ENCODE measurements at regions of chr6 and their contacts with region 1.

Region 1: GRCh38 chr6:159979136-159979874 is 10.4 kb downstream of the IGF2R start:
- DNase-seq: peak; percentile 40
- H3K4me3 Mint-ChIP-seq: peak overlapping the region; percentile 77
- H3K27ac Mint-ChIP-seq: peak overlapping the region; percentile 93
- H3K4me1 Mint-ChIP-seq: peaks cover 88% of the 10 kb centered on the region
- H3K27me3 Mint-ChIP-seq: no peaks in the 10 kb centered on the region

Region 2: DNA sequence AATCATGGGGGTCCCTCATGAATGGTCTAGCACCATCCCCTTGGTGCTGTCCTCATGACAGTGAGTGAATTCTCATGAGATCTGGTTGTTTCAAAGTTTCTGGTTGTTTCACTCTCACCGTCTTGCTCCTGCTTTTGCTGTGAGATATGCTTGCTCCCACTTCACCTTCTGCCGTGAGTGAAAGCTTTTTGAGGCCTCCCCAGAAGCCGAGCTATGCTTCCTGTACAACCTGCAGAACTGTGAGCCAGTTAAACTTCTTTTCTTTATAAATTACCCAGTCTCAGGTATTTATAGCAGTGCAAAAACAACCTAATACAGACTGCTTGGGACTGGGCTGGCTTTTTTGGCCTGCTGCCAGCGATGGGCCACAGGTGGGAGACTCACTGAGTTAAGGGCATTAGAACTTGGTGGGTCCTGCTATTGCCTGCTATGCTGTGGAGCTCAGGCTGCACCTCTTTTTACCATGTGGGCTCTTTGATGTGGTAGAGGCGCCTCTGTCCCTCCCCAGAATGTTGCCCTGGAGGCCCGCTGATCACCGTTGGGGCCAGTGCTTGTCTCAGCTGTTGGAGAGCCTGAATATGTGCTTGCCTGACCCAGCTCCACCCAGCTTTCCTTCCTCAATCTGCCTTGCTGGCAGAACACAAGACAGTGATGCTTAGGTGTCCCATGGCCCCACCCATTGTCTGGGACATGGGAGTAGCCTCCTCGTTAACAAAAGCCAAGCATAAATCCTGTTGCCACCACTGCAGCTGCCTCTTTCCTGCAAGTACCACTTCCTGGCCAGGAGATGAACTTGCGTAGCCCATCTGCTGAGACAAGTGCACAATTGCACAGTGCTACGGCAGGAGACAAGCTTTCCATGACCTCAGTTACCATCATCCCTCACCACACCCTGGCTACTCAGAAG is 36.7 kb after region 1 on chr6:
- intact Hi-C with region 1: loop called (anchors 1 kb)
- DNase-seq: peak; percentile 65
- H3K4me3 Mint-ChIP-seq: peak overlapping the region; percentile 3
- H3K27ac Mint-ChIP-seq: peak overlapping the region; percentile 91
- H3K4me1 Mint-ChIP-seq: peaks cover 66% of the 10 kb centered on the region
- H3K27me3 Mint-ChIP-seq: no peaks in the 10 kb centered on the region

Region 3: GRCh38 chr6:160261991-160262680 is 282.8 kb after region 1 on chr6:
- intact Hi-C with region 1: no loop called
- DNase-seq: no peak
- H3K4me3 Mint-ChIP-seq: no peak overlapping the region
- H3K27ac Mint-ChIP-seq: no peak overlapping the region
- H3K4me1 Mint-ChIP-seq: peaks cover 5% of the 10 kb centered on the region
- H3K27me3 Mint-ChIP-seq: peaks cover 4% of the 10 kb centered on the region

Measured in activated T-helper 2 cell treated with anti-CD3 and anti-CD28 coated beads, Interferon-gamma antibody, Interleukin-2, Interleukin-4, amounts not matched to agents 10 μg/mL and 5 μg/mL and 100 μg/mL, durations not matched to agents 14 hours and 24 hours and 36 hours (primary cell).